B cell (primary cell): ENCODE measurements at regions of chr1 and their contacts with region 1.

Region 1: DNA sequence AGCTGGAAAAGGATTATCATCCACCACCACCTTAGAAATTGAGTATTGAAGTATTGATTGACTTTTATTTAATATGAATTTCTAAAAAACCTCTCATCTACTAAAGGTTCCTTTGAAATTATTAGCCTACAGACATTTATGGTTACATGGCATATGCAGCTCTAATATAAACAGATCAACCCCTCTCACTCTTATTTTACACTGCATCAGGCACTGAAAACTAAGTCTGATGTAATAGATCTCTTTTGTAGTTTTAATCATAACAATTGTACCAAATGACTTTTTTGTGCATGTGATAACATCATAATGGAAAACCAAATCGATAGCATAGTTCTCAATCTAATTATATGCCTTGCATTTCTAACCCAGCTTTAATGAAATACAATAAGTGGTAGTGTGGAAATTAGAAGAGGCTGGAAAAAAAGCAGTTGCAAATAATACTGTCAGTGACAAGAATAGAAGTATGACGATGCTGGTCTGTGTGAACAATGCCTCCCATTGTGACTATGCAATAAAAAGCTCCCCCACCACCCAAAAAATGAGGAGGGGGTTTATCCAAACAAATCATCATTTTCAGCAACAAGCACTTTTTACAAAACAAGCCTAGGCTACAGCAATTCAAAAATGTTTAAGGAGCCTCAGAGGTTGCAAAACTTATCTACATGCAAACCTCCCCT is 426.5 kb upstream of the NFIA start:
- DNase-seq: no peak
- ATAC-seq: no peak
- H3K4me3 ChIP-seq: no peak overlapping the region
- H3K4me3 Mint-ChIP-seq: no peak overlapping the region
- H3K27ac ChIP-seq: no peak overlapping the region
- H3K27ac Mint-ChIP-seq: no peak overlapping the region
- H3K4me1 ChIP-seq: no peaks in the 10 kb centered on the region
- H3K4me1 Mint-ChIP-seq: no peaks in the 10 kb centered on the region
- H3K27me3 ChIP-seq: no peaks in the 10 kb centered on the region
- H3K27me3 Mint-ChIP-seq: no peaks in the 10 kb centered on the region
- CTCF ChIP-seq: no peak

Region 2: DNA sequence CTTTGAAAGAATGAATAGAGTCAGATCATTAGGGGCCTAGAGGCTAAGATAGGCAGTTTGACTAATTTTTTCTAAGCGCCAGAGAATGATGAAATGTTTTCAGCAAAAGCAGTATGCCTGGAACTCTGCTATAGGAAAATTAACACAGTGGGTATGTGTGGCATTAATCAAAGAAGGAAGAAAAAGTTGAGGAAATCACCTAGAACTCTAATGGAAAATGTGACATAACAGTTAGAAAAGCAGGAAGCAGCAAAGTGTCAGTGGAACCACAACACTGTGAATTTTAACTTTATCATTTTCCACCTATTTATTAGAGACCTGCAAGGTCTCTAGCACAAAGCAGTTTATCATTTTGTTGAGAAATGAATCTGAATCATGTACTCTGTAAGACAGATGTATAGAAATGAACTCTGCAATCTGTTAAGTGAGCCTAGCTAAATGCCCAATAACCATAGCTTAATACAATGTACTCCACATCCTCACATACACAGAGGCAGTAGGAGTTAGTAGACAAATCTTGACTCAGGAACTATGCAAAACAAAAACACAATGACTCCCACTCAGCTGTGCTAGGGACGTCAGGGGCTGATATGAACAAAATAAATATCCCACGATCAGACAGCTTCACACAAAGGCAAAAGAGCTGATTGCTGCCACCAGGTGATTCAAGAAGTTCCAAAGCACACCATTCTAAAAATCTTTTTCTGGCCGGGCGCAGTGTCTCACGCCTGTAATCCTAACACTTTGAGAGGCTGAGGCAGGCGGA is 74.2 kb before region 1 on chr1:
- CTCF ChIA-PET with region 1: no interaction called
- POLR2A ChIA-PET with region 1: no interaction called
- intact Hi-C with region 1: loop called (anchors 2 kb)
- DNase-seq: no peak
- ATAC-seq: no peak
- H3K4me3 ChIP-seq: no peak overlapping the region
- H3K4me3 Mint-ChIP-seq: no peak overlapping the region
- H3K27ac ChIP-seq: no peak overlapping the region
- H3K27ac Mint-ChIP-seq: no peak overlapping the region
- H3K4me1 ChIP-seq: no peaks in the 10 kb centered on the region
- H3K4me1 Mint-ChIP-seq: no peaks in the 10 kb centered on the region
- H3K27me3 ChIP-seq: no peaks in the 10 kb centered on the region
- H3K27me3 Mint-ChIP-seq: no peaks in the 10 kb centered on the region
- CTCF ChIP-seq: no peak

Region 3: GRCh38 chr1:60637651-60638050 is 18.2 kb before region 1 on chr1:
- CTCF ChIA-PET with region 1: no interaction called
- POLR2A ChIA-PET with region 1: no interaction called
- intact Hi-C with region 1: no loop called
- DNase-seq: no peak
- ATAC-seq: no peak
- H3K4me3 ChIP-seq: no peak overlapping the region
- H3K4me3 Mint-ChIP-seq: no peak overlapping the region
- H3K27ac ChIP-seq: no peak overlapping the region
- H3K27ac Mint-ChIP-seq: no peak overlapping the region
- H3K4me1 ChIP-seq: no peaks in the 10 kb centered on the region
- H3K4me1 Mint-ChIP-seq: no peaks in the 10 kb centered on the region
- H3K27me3 ChIP-seq: no peaks in the 10 kb centered on the region
- H3K27me3 Mint-ChIP-seq: no peaks in the 10 kb centered on the region
- CTCF ChIP-seq: no peak